Astrocyte of the cerebellum (primary cell): ENCODE measurements at regions of chr13 and their contacts with region 1.

Region 1: GRCh38 chr13:113022391-113023216 is 53.6 kb downstream of the MCF2L start:
- DNase-seq: no peak
- H3K4me3 ChIP-seq: no peak overlapping the region
- CTCF ChIP-seq: no peak

Region 2: GRCh38 chr13:112983428-112984196 is 39.0 kb before region 1 on chr13:
- in situ Hi-C with region 1: loop called (anchors 5 kb)
- DNase-seq: no peak
- H3K4me3 ChIP-seq: no peak overlapping the region
- CTCF ChIP-seq: no peak

Region 3: DNA sequence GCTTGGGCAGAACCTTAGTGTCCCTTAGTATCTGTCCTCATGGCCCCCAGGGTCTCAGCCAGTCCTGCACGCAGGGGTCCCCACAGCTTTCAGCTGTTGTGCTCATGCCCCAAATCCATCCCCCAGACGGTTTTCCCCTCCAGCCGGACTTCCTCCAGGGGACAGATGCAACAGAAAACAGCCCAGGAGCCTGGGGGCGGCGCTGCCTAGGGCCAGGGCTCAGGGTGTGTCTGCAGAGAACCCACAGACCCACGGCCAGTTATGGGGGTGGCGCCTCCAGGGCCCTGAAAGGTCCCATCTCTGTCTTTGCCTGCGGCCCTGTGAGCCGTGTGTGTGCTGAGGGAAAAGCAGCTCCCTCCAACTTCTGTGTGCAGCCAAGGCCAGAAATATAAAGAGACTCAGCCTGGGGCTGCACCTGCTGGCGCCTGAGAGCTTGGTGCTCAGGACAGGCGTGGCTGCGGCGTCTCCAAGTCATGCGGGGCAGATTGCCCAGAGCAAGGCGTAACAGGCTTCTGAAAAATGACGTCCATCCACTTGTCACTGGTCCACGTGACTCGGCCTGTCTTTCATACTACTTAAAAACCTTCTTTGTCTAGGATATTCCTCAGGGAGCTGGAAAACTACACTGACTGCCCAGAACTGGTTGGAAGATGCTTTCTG is 60.9 kb after region 1 on chr13:
- in situ Hi-C with region 1: no loop called
- DNase-seq: no peak
- H3K4me3 ChIP-seq: no peak overlapping the region
- CTCF ChIP-seq: no peak